Dendritic cell treated with granulocyte-macrophage colony-stimulating factor and Interleukin-4, amounts not matched to agents 40 ng/mL and 50 ng/mL, for 4 days (primary cell): ENCODE measurements at regions of chr5 and their contacts with region 1.

Region 1: GRCh38 chr5:82676661-82677060 is 398.5 kb upstream of the RPS23 start:
- H3K4me3 Mint-ChIP-seq: no peak overlapping the region
- H3K27ac Mint-ChIP-seq: peak overlapping the region; percentile 7
- H3K4me1 Mint-ChIP-seq: peaks cover 16% of the 10 kb centered on the region
- H3K27me3 Mint-ChIP-seq: peaks cover 2% of the 10 kb centered on the region

Region 2: DNA sequence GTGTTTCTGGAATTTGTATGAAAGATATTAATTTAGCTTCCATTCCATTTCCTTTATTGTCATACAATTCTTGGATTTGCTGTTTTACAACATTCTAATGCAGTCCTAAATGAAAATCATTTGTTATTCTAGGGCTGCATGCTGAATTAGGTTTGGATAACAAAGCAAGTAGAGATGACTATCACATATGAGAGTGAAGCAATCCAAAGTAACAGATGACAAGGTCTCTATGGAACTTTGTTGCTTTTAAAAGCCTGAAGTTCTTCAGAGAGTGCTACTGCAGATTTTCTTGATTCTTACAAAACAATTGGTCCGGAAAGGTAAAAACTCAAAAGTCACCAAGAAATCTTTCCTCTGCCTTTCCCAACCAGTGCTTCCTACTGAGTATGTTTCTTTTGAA is 737.9 kb after region 1 on chr5:
- intact Hi-C with region 1: loop called (anchors 10 kb)
- H3K4me3 Mint-ChIP-seq: no peak overlapping the region
- H3K27ac Mint-ChIP-seq: no peak overlapping the region
- H3K4me1 Mint-ChIP-seq: peaks cover 27% of the 10 kb centered on the region
- H3K27me3 Mint-ChIP-seq: no peaks in the 10 kb centered on the region